ENCODE measurements at regions of chr15 and their contacts with region 1.

Region 1: GRCh38 chr15:82540055-82540983 is at the start of gene RPS17:
- H3K4me3 ChIP-seq: peak within 1 kb of the TSS; percentile 78
- H3K27ac ChIP-seq: peak within 1 kb of the TSS; percentile 98
- H3K4me1 ChIP-seq: peaks cover 6% of the 10 kb centered on the region
- CTCF ChIP-seq: peak; percentile 99

Region 2: GRCh38 chr15:82239685-82240391 is 300.5 kb before region 1 on chr15:
- CTCF ChIA-PET with region 1: no interaction called
- POLR2A ChIA-PET with region 1: no interaction called
- H3K4me3 ChIP-seq: no peak overlapping the region
- H3K27ac ChIP-seq: no peak overlapping the region
- H3K4me1 ChIP-seq: no peaks in the 10 kb centered on the region
- CTCF ChIP-seq: no peak

Region 3: DNA sequence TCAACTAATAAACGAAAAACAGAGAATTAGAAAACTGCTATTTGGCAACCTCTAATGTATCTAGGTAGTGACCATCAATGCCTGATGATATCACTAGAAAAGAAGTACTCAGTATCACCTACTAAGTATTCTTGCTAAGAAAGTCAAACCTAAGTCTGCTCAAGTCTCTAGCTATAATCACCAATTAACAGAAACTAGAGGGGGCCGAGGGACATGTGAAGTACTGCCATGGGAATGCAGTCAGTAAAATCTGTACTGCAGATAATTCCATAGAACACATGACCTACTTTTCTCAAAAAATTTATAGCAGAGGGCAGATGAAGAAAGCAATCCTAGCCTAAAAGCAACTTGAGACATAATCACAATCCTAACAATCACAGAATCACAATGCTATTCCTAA is 55.4 kb after region 1 on chr15:
- CTCF ChIA-PET with region 1: no interaction called
- POLR2A ChIA-PET with region 1: no interaction called
- H3K4me3 ChIP-seq: no peak overlapping the region
- H3K27ac ChIP-seq: no peak overlapping the region
- H3K4me1 ChIP-seq: no peaks in the 10 kb centered on the region
- CTCF ChIP-seq: no peak

Region 4: DNA sequence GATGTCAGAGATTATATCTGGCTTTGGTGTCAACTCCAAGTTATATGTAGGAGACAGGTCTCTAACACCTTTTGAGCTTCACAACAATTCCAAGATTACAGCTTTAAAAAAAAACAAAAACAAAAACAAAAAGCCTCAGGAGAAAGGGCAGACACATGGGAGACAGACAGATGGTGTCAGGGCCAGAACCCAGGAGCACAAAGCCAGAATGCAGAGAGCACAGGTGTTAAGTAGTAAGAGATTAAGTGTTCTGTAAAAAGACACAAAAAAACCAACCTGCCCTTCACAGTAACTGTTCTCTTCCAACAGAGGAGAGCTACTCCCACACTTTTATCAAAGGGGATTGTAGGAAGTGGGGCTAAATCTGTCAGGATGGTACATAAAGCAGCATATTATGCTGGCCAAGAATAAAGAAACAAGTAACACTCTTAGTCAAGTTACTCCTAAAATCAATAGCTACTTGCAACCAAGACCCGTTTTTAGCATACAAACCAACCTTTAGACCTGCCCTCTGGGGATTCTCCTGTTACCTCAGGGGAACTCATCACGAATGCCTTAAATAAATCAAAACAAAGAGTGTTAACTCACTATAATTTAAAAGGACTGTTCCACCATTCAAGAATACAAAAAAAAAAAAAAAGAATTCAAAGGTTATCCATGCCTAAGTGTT is 100.9 kb after region 1 on chr15:
- CTCF ChIA-PET with region 1: interaction called, 7 read pairs
- POLR2A ChIA-PET with region 1: interaction called, 14 read pairs
- H3K4me3 ChIP-seq: no peak overlapping the region
- H3K27ac ChIP-seq: no peak overlapping the region
- H3K4me1 ChIP-seq: peaks cover 16% of the 10 kb centered on the region
- CTCF ChIP-seq: no peak

Region 5: DNA sequence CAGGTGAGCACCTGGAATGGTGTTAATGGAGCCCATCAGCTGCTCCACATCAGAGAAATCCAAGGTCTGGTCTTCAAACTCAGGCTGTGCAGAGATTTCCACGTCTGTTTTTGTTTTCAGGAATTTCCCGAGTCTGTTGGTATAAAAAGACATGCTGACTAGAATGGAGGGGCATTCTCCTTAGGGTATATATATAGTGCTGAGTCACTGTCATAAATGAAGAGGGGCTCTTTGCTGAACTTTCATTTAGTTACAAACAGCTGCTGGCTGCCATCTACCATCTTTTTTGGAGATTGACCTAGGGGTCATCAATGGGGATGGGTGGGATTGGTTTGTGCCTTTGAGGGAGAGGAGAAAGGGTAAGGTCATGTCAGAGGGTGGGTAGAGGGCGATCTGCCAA is 238.4 kb after region 1 on chr15:
- CTCF ChIA-PET with region 1: no interaction called
- POLR2A ChIA-PET with region 1: no interaction called
- H3K4me3 ChIP-seq: no peak overlapping the region
- H3K27ac ChIP-seq: no peak overlapping the region
- H3K4me1 ChIP-seq: no peaks in the 10 kb centered on the region
- CTCF ChIP-seq: no peak

Measured in HEK293 (cell line).